GM10248 (cell line): ENCODE measurements at regions of chr19 and their contacts with region 1.

Region 1: GRCh38 chr19:50537762-50538230 is 24.1 kb upstream of the ASPDH start:
- DNase-seq: peak; percentile 84
- CTCF ChIP-seq: peak; percentile 82

Region 2: DNA sequence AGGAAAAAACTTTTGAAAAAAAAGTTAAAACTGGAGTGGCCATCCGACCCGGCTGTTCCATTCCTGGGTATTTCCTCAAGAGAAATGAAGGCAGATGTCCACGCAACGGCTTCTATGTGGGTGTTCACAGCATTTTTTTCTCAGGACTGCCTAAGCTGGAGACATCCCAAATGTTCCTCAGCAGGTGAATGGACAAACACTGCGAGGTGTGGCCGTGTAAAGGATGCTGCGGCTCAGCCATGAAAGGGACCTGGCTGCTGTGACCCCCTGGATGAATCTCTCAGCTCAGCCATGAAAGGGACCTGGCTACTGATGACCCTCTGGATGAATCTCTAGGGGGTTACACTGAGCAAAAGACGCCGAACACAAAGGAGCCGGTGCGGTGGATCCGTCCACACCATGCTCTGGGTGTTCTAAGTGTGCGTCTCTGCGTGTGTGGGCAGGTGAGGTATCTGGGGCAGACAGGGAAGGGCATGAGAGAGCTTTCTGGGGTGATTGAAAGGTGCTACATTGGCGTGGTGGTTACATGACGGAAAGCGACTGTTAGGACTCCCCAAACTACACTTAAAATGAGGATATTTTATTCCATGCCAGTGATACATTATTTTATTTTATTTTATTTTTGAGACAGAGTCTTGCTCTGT is 16.9 kb before region 1 on chr19:
- CTCF ChIA-PET with region 1: interaction called, 19 read pairs
- POLR2A ChIA-PET with region 1: interaction called, 8 read pairs
- DNase-seq: no peak
- CTCF ChIP-seq: no peak

Region 3: DNA sequence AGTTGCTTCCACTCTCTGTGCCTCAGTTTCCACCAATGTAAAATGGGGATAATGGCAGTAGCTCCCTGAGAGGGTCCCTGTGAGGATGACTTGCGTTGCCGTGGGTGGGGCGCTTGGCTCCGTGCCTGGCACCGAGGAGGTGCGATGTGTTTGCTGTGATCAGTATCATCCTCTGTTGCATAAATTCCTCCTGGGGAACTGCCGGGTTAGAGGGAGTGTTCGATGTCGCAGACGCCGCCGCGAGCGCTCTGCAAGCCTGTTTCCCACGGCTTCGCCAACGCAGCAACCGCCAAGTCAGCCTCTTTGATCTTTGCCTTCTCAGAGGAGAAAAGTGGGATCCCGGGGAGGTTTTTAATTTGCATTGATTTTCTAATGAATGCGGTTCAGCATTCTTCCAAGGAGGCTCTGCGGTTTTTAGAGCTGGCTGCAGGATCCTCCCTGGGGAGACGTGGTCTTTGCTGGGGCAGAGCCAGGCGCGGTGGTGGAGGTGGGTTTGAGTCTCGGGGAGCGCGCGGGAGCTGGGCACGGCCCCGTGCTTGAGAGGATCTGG is 240.0 kb after region 1 on chr19:
- CTCF ChIA-PET with region 1: interaction called, 12 read pairs
- POLR2A ChIA-PET with region 1: interaction called, 4 read pairs
- DNase-seq: peak; percentile 5
- CTCF ChIP-seq: no peak

Region 4: DNA sequence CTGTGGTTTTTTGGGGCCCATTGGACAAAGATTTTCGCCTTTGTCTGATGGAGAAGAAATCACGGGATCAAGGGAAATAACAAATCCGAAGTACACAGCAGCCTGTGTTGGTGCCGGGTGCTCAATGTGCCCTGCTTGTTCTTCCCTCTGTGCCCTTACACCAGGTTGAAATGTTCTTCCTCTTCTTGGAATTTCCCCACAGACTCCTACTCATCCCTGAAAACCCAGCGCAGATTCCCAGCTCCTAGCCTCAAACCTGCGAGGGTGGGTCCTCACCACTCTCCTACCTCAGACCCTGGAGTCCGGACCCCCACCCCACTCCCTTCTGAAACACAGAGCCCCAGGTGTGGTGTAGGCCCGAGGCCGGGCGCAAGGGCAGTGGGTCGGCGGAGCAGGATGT is 247.5 kb after region 1 on chr19:
- CTCF ChIA-PET with region 1: interaction called, 20 read pairs
- POLR2A ChIA-PET with region 1: interaction called, 4 read pairs
- DNase-seq: no peak
- CTCF ChIP-seq: no peak